ENCODE measurements at regions of chr13 and their contacts with region 1.

Region 1: GRCh38 chr13:21176220-21176982 is at the starts of genes MRPL57 and SKA3:
- DNase-seq: peak; percentile 89
- ATAC-seq: peak; percentile 94
- H3K4me3 ChIP-seq: peak within 1 kb of the TSS; percentile 77 to 99 (median 95)
- H3K27ac ChIP-seq: peak within 1 kb of the TSS; percentile 92
- H3K4me1 ChIP-seq: peaks cover 57% of the 10 kb centered on the region
- H3K27me3 ChIP-seq: no peaks in the 10 kb centered on the region; a peak in 3 of 5 replicates
- CTCF ChIP-seq: peak; percentile 5; the same call in 1 of the 2 replicates
- EP300 ChIP-seq: no peak
- POLR2A ChIP-seq: peak; percentile 98 to 99
- RAD21 ChIP-seq: peak; percentile 47
- total RNA-seq, gene MRPL57: 35.2 and 36.7 TPM in 2 replicates
- total RNA-seq, gene SKA3: 10.8 and 15.2 TPM in 2 replicates

Region 2: GRCh38 chr13:19967621-19968020 is 1208.8 kb before region 1 on chr13:
- CTCF ChIA-PET with region 1: no interaction called
- POLR2A ChIA-PET with region 1: no interaction called
- in situ Hi-C with region 1: no loop called
- intact Hi-C with region 1: no loop called
- DNase-seq: no peak
- ATAC-seq: no peak
- H3K4me3 ChIP-seq: no peak overlapping the region
- H3K27ac ChIP-seq: no peak overlapping the region
- H3K4me1 ChIP-seq: peaks cover 19% of the 10 kb centered on the region
- H3K27me3 ChIP-seq: no peaks in the 10 kb centered on the region
- CTCF ChIP-seq: no peak
- EP300 ChIP-seq: no peak
- POLR2A ChIP-seq: no peak
- RAD21 ChIP-seq: no peak

Region 3: GRCh38 chr13:20945952-20946383 is 230.4 kb before region 1 on chr13:
- CTCF ChIA-PET with region 1: interaction called, 8 read pairs
- POLR2A ChIA-PET with region 1: interaction called, 7 read pairs
- in situ Hi-C with region 1: loop called (anchors 10 kb)
- intact Hi-C with region 1: loop called (anchors 1 kb)
- DNase-seq: no peak
- ATAC-seq: no peak
- H3K4me3 ChIP-seq: no peak overlapping the region
- H3K27ac ChIP-seq: no peak overlapping the region
- H3K4me1 ChIP-seq: peaks cover 21% of the 10 kb centered on the region
- H3K27me3 ChIP-seq: peaks cover 0 to 6% of the 10 kb centered on the region in 2 experiments; a peak in 1 of 5 replicates
- CTCF ChIP-seq: no peak
- EP300 ChIP-seq: no peak
- POLR2A ChIP-seq: no peak
- RAD21 ChIP-seq: no peak

Region 4: DNA sequence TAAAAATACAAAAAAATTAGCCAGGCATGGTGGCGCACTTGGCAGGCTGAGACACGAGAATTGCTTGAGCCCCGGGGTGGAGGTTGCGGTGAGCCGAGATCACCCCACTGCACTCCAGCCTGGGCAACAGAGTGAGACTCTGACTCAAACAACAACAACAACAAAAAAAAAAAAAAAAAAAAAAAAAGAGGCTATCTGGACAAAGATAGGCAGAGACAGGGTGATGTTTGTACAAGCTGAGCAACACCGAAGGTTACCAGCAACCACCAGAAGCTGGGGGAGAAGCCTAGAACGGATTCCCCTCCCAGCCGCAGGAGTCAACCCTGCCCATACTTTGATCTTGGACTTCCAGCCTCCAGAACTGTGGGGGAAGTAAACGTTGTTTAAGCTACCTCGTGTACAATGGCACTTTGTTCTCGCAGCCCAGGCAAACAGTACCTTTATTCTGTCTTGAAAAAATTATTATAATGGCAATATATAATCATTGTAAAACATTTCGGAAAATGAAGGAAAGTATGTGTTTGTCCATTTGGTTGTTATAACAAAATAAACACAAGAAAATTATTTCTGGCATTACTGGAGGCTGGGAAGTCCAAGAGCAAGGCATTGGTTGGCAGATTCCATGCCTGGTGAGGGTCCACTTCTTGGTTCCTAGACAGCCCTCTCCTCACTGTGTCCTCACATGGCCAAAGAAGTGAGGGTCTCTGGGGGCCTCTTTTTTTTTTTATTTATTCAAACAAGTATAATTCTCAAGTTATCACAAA is 75.2 kb before region 1 on chr13:
- CTCF ChIA-PET with region 1: no interaction called
- POLR2A ChIA-PET with region 1: interaction called, 15 read pairs
- in situ Hi-C with region 1: no loop called
- intact Hi-C with region 1: no loop called
- DNase-seq: peak; percentile 96
- ATAC-seq: peak; percentile 92
- H3K4me3 ChIP-seq: peak overlapping the region in 2 of 3 experiments; percentile 24 to 65; a peak in 3 of 6 replicates
- H3K27ac ChIP-seq: peak overlapping the region; percentile 81
- H3K4me1 ChIP-seq: peaks cover 52% of the 10 kb centered on the region
- H3K27me3 ChIP-seq: no peaks in the 10 kb centered on the region; a peak in 1 of 5 replicates
- CTCF ChIP-seq: no peak
- EP300 ChIP-seq: peak in 1 of 2 experiments; percentile 87; a peak in 2 of 4 replicates
- POLR2A ChIP-seq: no peak
- RAD21 ChIP-seq: no peak

Region 5: DNA sequence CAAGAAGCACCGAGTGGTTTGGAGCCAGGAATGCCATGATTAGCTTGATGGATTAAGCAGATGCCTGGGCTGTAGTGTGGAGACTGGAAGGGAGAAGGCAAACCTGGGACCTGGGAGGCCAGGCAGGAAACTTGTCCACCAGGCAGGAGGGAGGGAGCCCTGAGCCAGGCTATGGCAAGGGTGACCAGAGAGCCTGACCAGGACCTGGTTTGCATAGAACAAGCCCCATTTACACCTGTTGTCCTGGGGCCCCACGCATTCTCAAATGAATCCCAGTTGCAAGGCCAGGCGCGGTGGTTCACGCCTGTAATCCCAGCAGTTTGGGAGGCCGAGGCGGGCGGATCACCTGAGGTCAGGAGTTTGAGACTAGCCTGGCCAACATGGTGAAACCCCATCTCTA is 64.9 kb before region 1 on chr13:
- CTCF ChIA-PET with region 1: interaction called, 10 read pairs
- POLR2A ChIA-PET with region 1: no interaction called
- in situ Hi-C with region 1: no loop called
- intact Hi-C with region 1: loop called (anchors 2 kb)
- DNase-seq: no peak
- ATAC-seq: no peak
- H3K4me3 ChIP-seq: no peak overlapping the region
- H3K27ac ChIP-seq: no peak overlapping the region
- H3K4me1 ChIP-seq: peaks cover 55% of the 10 kb centered on the region
- H3K27me3 ChIP-seq: no peaks in the 10 kb centered on the region
- CTCF ChIP-seq: no peak
- EP300 ChIP-seq: no peak
- POLR2A ChIP-seq: no peak
- RAD21 ChIP-seq: no peak